Activated CD4-positive, alpha-beta T cell treated with anti-CD3 and anti-CD28 coated beads, Interleukin-2, amount 10 ng/mL, durations not matched to agents 24 days and 14 days (primary cell): ENCODE measurements at regions of chrX and their contacts with region 1.

Region 1: GRCh38 chrX:155026726-155027508 is at the start of gene FUNDC2:
- DNase-seq: peak; percentile 98
- H3K4me3 Mint-ChIP-seq: peak within 1 kb of the TSS; percentile 87
- H3K27ac Mint-ChIP-seq: peak within 1 kb of the TSS; percentile 92
- H3K4me1 Mint-ChIP-seq: peaks cover 11% of the 10 kb centered on the region
- H3K27me3 Mint-ChIP-seq: peaks cover 16% of the 10 kb centered on the region
- total RNA-seq, gene FUNDC2: 74.9 and 75.7 TPM in 2 replicates

Region 2: GRCh38 chrX:154378782-154379591 is 647.9 kb before region 1 on chrX and contains the start of gene EMD:
- intact Hi-C with region 1: loop called (anchors 10 kb)
- DNase-seq: peak; percentile 98
- H3K4me3 Mint-ChIP-seq: peak within 1 kb of the TSS; percentile 88
- H3K27ac Mint-ChIP-seq: peak within 1 kb of the TSS; percentile 92
- H3K4me1 Mint-ChIP-seq: peaks cover 14% of the 10 kb centered on the region
- H3K27me3 Mint-ChIP-seq: no peaks in the 10 kb centered on the region
- total RNA-seq, gene EMD: 91.7 and 92.8 TPM in 2 replicates

Region 3: GRCh38 chrX:154990496-154990895 is 36.4 kb before region 1 on chrX:
- intact Hi-C with region 1: loop called (anchors 2 kb)
- DNase-seq: no peak
- H3K4me3 Mint-ChIP-seq: no peak overlapping the region
- H3K27ac Mint-ChIP-seq: no peak overlapping the region
- H3K4me1 Mint-ChIP-seq: peaks cover 12% of the 10 kb centered on the region
- H3K27me3 Mint-ChIP-seq: peaks cover 10% of the 10 kb centered on the region

Region 4: DNA sequence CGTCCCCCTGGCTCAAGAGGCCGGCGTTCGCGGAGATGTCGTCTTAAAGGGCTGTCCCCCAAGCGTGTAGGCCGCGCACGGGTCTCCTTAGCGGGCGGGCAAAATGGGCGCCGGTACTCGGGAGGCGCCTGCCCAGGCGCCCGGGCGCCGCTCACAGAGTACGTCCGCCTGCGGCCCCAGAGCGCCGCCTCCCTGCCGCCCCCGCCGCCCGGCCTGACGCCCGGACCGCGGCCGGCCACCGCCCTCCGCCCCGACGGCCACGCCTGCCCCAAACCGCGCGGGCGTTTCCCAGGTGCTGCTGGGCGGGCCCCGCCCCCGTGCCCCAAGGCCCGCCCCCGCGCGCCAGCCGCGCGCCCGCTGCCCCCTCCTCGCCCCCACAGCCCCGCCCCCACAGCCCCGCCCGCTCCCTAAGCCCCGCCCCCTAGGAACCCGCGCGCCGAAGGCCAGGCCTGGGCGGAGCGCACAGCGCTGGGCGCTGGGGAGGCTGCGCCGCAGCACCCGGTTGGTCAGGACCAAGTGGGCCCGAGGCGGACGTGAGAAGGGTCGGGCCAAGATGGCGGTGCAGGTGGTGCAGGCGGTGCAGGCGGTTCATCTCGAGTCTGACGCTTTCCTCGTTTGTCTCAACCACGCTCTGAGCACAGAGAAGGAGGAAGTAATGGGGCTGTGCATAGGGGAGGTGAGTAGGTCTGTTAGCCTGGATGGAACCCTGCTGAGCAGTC is 44.2 kb after region 1 on chrX and contains the starts of genes BRCC3, CMC4 and MTCP1:
- intact Hi-C with region 1: loop called (anchors 1 kb)
- DNase-seq: peak; percentile 93
- H3K4me3 Mint-ChIP-seq: peak within 1 kb of the TSS; percentile 95
- H3K27ac Mint-ChIP-seq: peak within 1 kb of the TSS; percentile 97
- H3K4me1 Mint-ChIP-seq: peaks cover 39% of the 10 kb centered on the region
- H3K27me3 Mint-ChIP-seq: no peaks in the 10 kb centered on the region
- total RNA-seq, gene BRCC3: 28.8 and 28.9 TPM in 2 replicates
- total RNA-seq, gene CMC4: 2.5 and 3.6 TPM in 2 replicates
- total RNA-seq, gene MTCP1: 9.8 and 11.4 TPM in 2 replicates